Activated naive CD4-positive, alpha-beta T cell treated with anti-CD3 and anti-CD28 coated beads for 36 hours (primary cell): ENCODE measurements at regions of chr1 and their contacts with region 1.

Region 1: GRCh38 chr1:165392634-165393571 is 36.4 kb upstream of the LMX1A start:
- DNase-seq: peak; percentile 91
- H3K4me3 Mint-ChIP-seq: peak overlapping the region; percentile 52
- H3K27ac Mint-ChIP-seq: peak overlapping the region; percentile 61
- H3K4me1 Mint-ChIP-seq: peaks cover 15% of the 10 kb centered on the region
- H3K27me3 Mint-ChIP-seq: peaks cover 54% of the 10 kb centered on the region

Region 2: DNA sequence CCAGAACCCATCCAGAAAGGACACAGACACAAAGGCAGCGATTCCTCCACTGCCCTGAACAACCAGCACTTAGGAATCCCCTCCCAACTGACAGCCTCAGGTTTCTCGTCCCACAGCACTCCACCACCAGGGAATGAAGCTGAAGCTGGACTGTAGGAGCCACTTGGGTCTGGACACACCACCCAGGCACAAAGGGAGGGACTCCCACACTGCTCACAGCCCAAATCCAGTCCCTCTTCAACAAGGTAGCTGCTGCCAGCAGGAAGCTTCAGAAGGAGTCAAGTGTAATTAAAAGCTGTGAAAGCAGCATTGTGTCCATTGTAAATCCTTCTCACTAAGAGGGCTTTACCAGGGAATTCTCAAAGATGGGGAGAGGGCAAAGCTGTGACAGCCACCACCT is 65.4 kb before region 1 on chr1:
- CTCF ChIA-PET with region 1: no interaction called
- intact Hi-C with region 1: no loop called
- DNase-seq: no peak
- H3K4me3 Mint-ChIP-seq: no peak overlapping the region
- H3K27ac Mint-ChIP-seq: no peak overlapping the region
- H3K4me1 Mint-ChIP-seq: no peaks in the 10 kb centered on the region
- H3K27me3 Mint-ChIP-seq: peaks cover 16% of the 10 kb centered on the region

Region 3: GRCh38 chr1:165376041-165376810 is 16.7 kb before region 1 on chr1:
- CTCF ChIA-PET with region 1: interaction called, 34 read pairs
- intact Hi-C with region 1: loop called (anchors 1 kb)
- DNase-seq: peak; percentile 87
- H3K4me3 Mint-ChIP-seq: peak overlapping the region; percentile 60
- H3K27ac Mint-ChIP-seq: no peak overlapping the region
- H3K4me1 Mint-ChIP-seq: peaks cover 16% of the 10 kb centered on the region
- H3K27me3 Mint-ChIP-seq: peaks cover 49% of the 10 kb centered on the region

Region 4: GRCh38 chr1:165403835-165404482 is 11.1 kb after region 1 on chr1:
- CTCF ChIA-PET with region 1: interaction called, 24 read pairs
- intact Hi-C with region 1: loop called (anchors 1 kb)
- DNase-seq: peak; percentile 57
- H3K4me3 Mint-ChIP-seq: no peak overlapping the region
- H3K27ac Mint-ChIP-seq: no peak overlapping the region
- H3K4me1 Mint-ChIP-seq: peaks cover 2% of the 10 kb centered on the region
- H3K27me3 Mint-ChIP-seq: peaks cover 17% of the 10 kb centered on the region

Region 5: DNA sequence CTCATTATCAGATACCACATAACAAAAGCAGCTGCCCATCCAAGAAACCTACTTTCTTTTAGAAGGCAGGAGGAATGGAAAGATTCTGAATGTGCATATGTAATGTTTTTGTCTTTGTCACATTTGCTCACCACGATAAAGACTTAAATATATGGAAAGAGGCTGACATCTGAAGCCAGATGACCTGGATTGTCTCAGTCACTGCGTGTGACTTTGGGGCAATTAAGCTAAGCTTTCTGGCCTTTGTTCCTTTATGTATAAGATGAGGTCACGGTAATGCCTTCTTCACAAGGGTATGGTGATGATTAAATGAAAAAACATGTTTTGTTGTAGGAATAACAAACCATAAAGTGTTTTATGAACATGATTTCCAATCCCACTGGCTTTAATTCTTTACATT is 193.5 kb after region 1 on chr1:
- CTCF ChIA-PET with region 1: interaction called, 99 read pairs
- intact Hi-C with region 1: no loop called
- DNase-seq: no peak
- H3K4me3 Mint-ChIP-seq: no peak overlapping the region
- H3K27ac Mint-ChIP-seq: no peak overlapping the region
- H3K4me1 Mint-ChIP-seq: no peaks in the 10 kb centered on the region
- H3K27me3 Mint-ChIP-seq: peaks cover 43% of the 10 kb centered on the region